ENCODE measurements at regions of chr7 and their contacts with region 1.

Region 1: GRCh38 chr7:88020953-88021665 is 87.1 kb downstream of the ADAM22 start:
- DNase-seq: no peak
- ATAC-seq: no peak
- H3K4me3 ChIP-seq: no peak overlapping the region
- H3K27ac ChIP-seq: no peak overlapping the region
- H3K4me1 ChIP-seq: no peaks in the 10 kb centered on the region
- H3K27me3 ChIP-seq: no peaks in the 10 kb centered on the region
- CTCF ChIP-seq: no peak
- EP300 ChIP-seq: no peak
- POLR2A ChIP-seq: no peak
- RAD21 ChIP-seq: no peak

Region 2: DNA sequence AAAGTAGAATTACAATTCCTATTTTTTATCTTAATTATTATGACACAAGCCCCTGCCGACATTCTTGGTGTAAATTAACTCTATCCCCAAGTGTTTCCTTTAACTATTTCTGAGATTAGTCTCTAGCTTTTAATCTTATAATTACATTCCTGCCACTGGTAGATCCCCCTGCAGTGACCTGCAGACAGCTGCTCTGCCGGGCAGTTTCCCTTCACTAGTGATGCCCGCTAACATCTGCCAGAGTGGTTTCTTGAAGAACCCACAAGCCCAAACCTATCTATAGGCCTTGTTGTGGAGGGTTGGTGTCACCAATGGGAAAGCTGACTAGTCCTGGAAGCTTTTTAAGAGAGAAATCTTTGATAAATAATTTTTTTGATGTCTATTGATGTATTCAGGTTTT is 37.0 kb before region 1 on chr7:
- CTCF ChIA-PET with region 1: no interaction called
- POLR2A ChIA-PET with region 1: no interaction called
- in situ Hi-C with region 1: no loop called
- intact Hi-C with region 1: loop called (anchors 1 kb)
- DNase-seq: no peak
- ATAC-seq: no peak
- H3K4me3 ChIP-seq: no peak overlapping the region
- H3K27ac ChIP-seq: no peak overlapping the region
- H3K4me1 ChIP-seq: no peaks in the 10 kb centered on the region
- H3K27me3 ChIP-seq: no peaks in the 10 kb centered on the region
- CTCF ChIP-seq: no peak
- EP300 ChIP-seq: no peak
- POLR2A ChIP-seq: no peak
- RAD21 ChIP-seq: no peak

Region 3: DNA sequence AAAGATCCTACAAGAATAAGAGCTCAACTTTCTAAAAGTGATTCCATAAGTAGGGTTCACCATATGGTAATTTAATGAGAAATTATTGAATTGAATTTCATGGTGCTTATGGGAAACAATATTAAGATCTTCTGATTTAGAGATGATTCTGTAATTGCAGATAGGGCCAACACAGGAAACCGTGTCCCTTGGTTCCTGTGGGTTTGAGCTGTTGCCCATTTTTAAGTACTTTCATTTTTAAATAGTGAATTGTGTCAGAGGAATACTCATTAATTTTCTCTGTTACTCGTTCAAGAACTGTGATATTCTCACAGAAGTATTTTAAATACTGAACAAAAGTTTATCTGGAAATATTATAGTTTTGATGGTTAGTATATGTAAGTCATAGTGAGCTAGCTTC is 69.6 kb after region 1 on chr7:
- CTCF ChIA-PET with region 1: no interaction called
- POLR2A ChIA-PET with region 1: no interaction called
- in situ Hi-C with region 1: no loop called
- intact Hi-C with region 1: no loop called
- DNase-seq: no peak
- ATAC-seq: no peak
- H3K4me3 ChIP-seq: no peak overlapping the region
- H3K27ac ChIP-seq: no peak overlapping the region
- H3K4me1 ChIP-seq: no peaks in the 10 kb centered on the region
- H3K27me3 ChIP-seq: no peaks in the 10 kb centered on the region
- CTCF ChIP-seq: no peak
- EP300 ChIP-seq: no peak
- POLR2A ChIP-seq: no peak
- RAD21 ChIP-seq: no peak

Measured in HepG2 (cell line).